ENCODE measurements at regions of chr3 and their contacts with region 1.

Region 1: GRCh38 chr3:42090973-42091731 is at the start of gene TRAK1:
- DNase-seq: peak; percentile 95
- H3K4me3 ChIP-seq: peak within 1 kb of the TSS; percentile 37 to 58 (median 54)
- H3K27ac ChIP-seq: peak within 1 kb of the TSS; percentile 79
- H3K4me1 ChIP-seq: peaks cover 17% of the 10 kb centered on the region
- H3K27me3 ChIP-seq: no peaks in the 10 kb centered on the region
- CTCF ChIP-seq: peak in 1 of 2 donors; percentile 20
- total RNA-seq, gene TRAK1: 64.5 to 67.2 TPM

Region 2: DNA sequence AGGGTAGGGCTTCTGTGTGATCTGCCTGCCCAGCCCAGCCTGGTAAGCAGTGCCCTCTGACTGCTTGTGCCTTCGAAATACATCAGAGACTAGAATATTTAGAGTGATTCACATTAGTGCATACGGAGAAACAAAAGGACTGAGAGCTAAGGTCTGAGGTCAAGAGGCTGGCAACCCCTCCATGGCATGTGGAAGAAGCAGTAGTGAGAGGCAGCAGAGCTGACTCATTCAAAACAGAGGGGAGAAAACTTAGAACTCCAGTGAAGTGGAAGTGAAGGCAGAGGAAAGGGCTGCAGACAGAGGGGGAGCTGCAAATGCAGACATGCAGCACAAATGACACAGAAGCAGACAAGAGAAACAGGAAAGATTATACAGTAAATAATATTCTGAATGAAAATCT is 190.9 kb before region 1 on chr3:
- CTCF ChIA-PET with region 1: no interaction called
- dilution Hi-C with region 1: no loop called
- in situ Hi-C with region 1: loop called in 1 of 2 experiments (anchors 10 kb)
- intact Hi-C with region 1: no loop called
- DNase-seq: no peak
- H3K4me3 ChIP-seq: no peak overlapping the region
- H3K27ac ChIP-seq: no peak overlapping the region
- H3K4me1 ChIP-seq: no peaks in the 10 kb centered on the region
- H3K27me3 ChIP-seq: no peaks in the 10 kb centered on the region
- CTCF ChIP-seq: no peak

Region 3: GRCh38 chr3:42020681-42021307 is 70.4 kb before region 1 on chr3:
- CTCF ChIA-PET with region 1: no interaction called
- dilution Hi-C with region 1: no loop called
- in situ Hi-C with region 1: loop called in 1 of 2 experiments (anchors 10 kb)
- intact Hi-C with region 1: loop called (anchors 2 kb)
- DNase-seq: peak; percentile 80
- H3K4me3 ChIP-seq: peak overlapping the region in 1 of 3 experiments; percentile 19
- H3K27ac ChIP-seq: peak overlapping the region; percentile 75
- H3K4me1 ChIP-seq: peaks cover 45% of the 10 kb centered on the region
- H3K27me3 ChIP-seq: no peaks in the 10 kb centered on the region
- CTCF ChIP-seq: no peak

Region 4: GRCh38 chr3:42071904-42072592 is 19.1 kb before region 1 on chr3:
- CTCF ChIA-PET with region 1: no interaction called
- dilution Hi-C with region 1: no loop called
- in situ Hi-C with region 1: no loop called
- intact Hi-C with region 1: loop called (anchors 1 kb)
- DNase-seq: peak; percentile 82
- H3K4me3 ChIP-seq: peak overlapping the region; percentile 4 to 30 (median 6)
- H3K27ac ChIP-seq: peak overlapping the region; percentile 39
- H3K4me1 ChIP-seq: peaks cover 39% of the 10 kb centered on the region
- H3K27me3 ChIP-seq: no peaks in the 10 kb centered on the region
- CTCF ChIP-seq: no peak

Measured in mammary epithelial cell (primary cell).